ENCODE measurements at regions of chr1 and their contacts with region 1.

Region 1: GRCh38 chr1:40709100-40709801 is 17.7 kb downstream of the NFYC start:
- DNase-seq: peak; percentile 88
- ATAC-seq: peak; percentile 95
- H3K4me3 Mint-ChIP-seq: peak overlapping the region; percentile 93
- H3K27ac Mint-ChIP-seq: peak overlapping the region; percentile 94
- H3K4me1 Mint-ChIP-seq: peaks cover 63% of the 10 kb centered on the region
- H3K27me3 Mint-ChIP-seq: no peaks in the 10 kb centered on the region
- CTCF ChIP-seq: no peak

Region 2: GRCh38 chr1:40691538-40692428 is 17.5 kb before region 1 on chr1 and contains the start of gene NFYC:
- CTCF ChIA-PET with region 1: interaction called, 9 read pairs
- POLR2A ChIA-PET with region 1: interaction called, 60 read pairs
- intact Hi-C with region 1: no loop called
- DNase-seq: peak; percentile 98
- ATAC-seq: peak; percentile 86
- H3K4me3 Mint-ChIP-seq: peak within 1 kb of the TSS; percentile 87
- H3K27ac Mint-ChIP-seq: peak within 1 kb of the TSS; percentile 93
- H3K4me1 Mint-ChIP-seq: peaks cover 50% of the 10 kb centered on the region
- H3K27me3 Mint-ChIP-seq: no peaks in the 10 kb centered on the region
- CTCF ChIP-seq: no peak
- total RNA-seq, gene NFYC: 45.6 to 53.8 TPM

Region 3: DNA sequence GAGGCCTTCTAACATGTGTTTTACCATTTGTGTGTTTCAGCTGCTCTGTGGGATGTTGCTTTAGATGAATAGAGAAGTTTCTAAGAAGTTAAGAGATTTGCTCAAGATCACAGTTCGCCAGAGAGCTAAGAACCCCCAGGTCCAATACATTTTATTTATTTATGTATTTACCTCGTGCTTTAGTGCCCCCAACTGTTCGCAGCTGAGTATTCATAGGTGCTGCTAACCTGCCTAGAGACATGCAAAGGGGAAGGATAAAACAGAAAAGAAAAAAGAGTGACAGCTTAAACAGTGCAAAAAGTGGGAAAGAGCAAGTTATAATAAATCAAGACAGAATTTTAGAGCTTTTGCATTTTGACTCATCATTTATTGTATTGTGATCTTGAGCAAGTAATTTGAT is 13.4 kb after region 1 on chr1:
- CTCF ChIA-PET with region 1: interaction called, 13 read pairs
- POLR2A ChIA-PET with region 1: interaction called, 3 read pairs
- intact Hi-C with region 1: no loop called
- DNase-seq: no peak
- ATAC-seq: no peak
- H3K4me3 Mint-ChIP-seq: no peak overlapping the region
- H3K27ac Mint-ChIP-seq: no peak overlapping the region
- H3K4me1 Mint-ChIP-seq: peaks cover 34% of the 10 kb centered on the region
- H3K27me3 Mint-ChIP-seq: no peaks in the 10 kb centered on the region
- CTCF ChIP-seq: no peak

Region 4: GRCh38 chr1:40802078-40802741 is 93.0 kb after region 1 on chr1:
- CTCF ChIA-PET with region 1: no interaction called
- POLR2A ChIA-PET with region 1: no interaction called
- intact Hi-C with region 1: no loop called
- DNase-seq: peak; percentile 91
- ATAC-seq: peak; percentile 96
- H3K4me3 Mint-ChIP-seq: peak overlapping the region; percentile 46
- H3K27ac Mint-ChIP-seq: no peak overlapping the region
- H3K4me1 Mint-ChIP-seq: peaks cover 28% of the 10 kb centered on the region
- H3K27me3 Mint-ChIP-seq: no peaks in the 10 kb centered on the region
- CTCF ChIP-seq: no peak

Measured in activated CD8-positive, alpha-beta T cell treated with anti-CD3 and anti-CD28 coated beads for 36 hours (primary cell).